Activated T-helper 1 cell treated with anti-CD3 and anti-CD28 coated beads, Interleukin-12 subunit alpha, Interleukin-12 subunit beta, Interleukin-2, Interleukin-4 antibody, amounts not matched to agents 30 ng/mL and 10 ng/mL and 1 ng/mL, durations not matched to agents 14 hours and 24 hours and 36 hours (primary cell): ENCODE measurements at regions of chr2 and their contacts with region 1.

Region 1: DNA sequence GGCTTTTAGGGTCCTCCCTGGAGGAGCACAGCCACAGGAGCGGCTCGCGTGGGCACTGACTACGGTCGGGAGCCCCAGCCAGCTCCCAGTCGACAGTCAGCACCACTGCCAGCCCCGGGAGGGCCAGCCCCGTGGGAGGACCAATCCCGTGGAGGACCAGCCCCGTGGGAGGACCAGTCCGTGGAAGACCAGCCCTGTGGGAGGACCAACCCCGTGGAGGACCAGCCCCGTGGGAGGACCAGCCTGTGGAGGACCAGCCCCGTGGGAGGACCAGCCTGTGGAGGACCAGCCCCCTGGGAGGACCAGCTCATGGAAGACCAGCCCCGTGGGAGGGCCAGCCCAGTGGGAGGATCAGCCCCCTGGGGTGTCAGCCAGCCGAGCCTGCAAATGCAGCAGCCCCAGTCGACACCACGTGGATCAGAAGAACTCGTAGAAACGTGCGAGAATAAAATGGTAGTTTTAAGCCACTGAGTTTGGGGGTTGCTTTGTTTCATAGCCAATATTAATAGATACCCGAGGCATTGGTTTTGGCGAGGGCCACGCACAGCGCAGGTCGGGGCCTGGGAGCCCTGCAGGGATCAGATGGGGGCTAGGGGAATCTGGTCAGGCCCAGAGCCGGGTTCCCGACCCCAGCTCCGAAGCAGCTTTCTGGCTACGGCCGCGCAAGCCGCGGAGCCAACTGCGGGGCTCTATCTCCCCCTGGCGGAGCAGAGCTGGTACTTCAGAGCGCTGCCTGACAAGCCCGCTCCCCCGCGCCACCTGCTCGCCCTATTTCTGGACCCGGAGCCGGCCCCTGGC is 73.0 kb downstream of the TEX51 start:
- DNase-seq: peak; percentile 47
- H3K4me3 Mint-ChIP-seq: peak overlapping the region; percentile 43
- H3K27ac Mint-ChIP-seq: no peak overlapping the region
- H3K4me1 Mint-ChIP-seq: peaks cover 5% of the 10 kb centered on the region
- H3K27me3 Mint-ChIP-seq: peaks cover 29% of the 10 kb centered on the region

Region 2: GRCh38 chr2:126644630-126645191 is 327.0 kb before region 1 on chr2:
- intact Hi-C with region 1: no loop called
- DNase-seq: no peak
- H3K4me3 Mint-ChIP-seq: no peak overlapping the region
- H3K27ac Mint-ChIP-seq: no peak overlapping the region
- H3K4me1 Mint-ChIP-seq: no peaks in the 10 kb centered on the region
- H3K27me3 Mint-ChIP-seq: peaks cover 7% of the 10 kb centered on the region

Region 3: GRCh38 chr2:127049927-127050802 is 78.5 kb after region 1 on chr2:
- intact Hi-C with region 1: loop called (anchors 2 kb)
- DNase-seq: peak; percentile 40
- H3K4me3 Mint-ChIP-seq: no peak overlapping the region
- H3K27ac Mint-ChIP-seq: no peak overlapping the region
- H3K4me1 Mint-ChIP-seq: no peaks in the 10 kb centered on the region
- H3K27me3 Mint-ChIP-seq: no peaks in the 10 kb centered on the region

Region 4: DNA sequence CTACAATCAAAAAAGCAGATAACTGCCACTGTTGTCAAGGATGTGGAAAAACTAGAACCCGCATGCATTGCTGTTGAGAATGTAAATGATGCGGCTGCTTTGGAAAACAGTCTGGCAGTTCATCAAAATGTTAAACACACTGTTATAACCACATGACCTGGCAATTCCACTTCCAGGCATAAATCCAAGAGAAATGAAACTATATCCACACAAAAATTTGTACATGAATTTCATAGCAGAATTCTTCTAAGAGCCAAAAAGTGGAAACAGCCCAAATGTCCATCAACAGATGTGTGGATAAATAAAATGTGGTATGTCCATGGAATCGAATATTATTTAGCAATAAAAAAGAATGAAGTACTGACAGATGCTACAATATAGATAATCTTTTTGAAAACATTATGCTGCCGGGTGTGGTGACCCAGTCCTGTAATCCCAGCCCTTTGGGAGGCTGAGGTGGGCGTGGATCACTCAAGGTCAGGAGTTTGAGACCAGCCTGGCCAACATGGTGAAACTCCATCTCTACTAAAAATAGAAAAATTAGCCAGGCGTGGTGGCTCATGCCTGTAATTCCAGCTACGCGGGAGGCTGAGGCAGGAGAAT is 290.2 kb after region 1 on chr2:
- intact Hi-C with region 1: no loop called
- DNase-seq: no peak
- H3K4me3 Mint-ChIP-seq: no peak overlapping the region
- H3K27ac Mint-ChIP-seq: no peak overlapping the region
- H3K4me1 Mint-ChIP-seq: no peaks in the 10 kb centered on the region
- H3K27me3 Mint-ChIP-seq: no peaks in the 10 kb centered on the region